ENCODE measurements at regions of chr5 and their contacts with region 1.

Region 1: DNA sequence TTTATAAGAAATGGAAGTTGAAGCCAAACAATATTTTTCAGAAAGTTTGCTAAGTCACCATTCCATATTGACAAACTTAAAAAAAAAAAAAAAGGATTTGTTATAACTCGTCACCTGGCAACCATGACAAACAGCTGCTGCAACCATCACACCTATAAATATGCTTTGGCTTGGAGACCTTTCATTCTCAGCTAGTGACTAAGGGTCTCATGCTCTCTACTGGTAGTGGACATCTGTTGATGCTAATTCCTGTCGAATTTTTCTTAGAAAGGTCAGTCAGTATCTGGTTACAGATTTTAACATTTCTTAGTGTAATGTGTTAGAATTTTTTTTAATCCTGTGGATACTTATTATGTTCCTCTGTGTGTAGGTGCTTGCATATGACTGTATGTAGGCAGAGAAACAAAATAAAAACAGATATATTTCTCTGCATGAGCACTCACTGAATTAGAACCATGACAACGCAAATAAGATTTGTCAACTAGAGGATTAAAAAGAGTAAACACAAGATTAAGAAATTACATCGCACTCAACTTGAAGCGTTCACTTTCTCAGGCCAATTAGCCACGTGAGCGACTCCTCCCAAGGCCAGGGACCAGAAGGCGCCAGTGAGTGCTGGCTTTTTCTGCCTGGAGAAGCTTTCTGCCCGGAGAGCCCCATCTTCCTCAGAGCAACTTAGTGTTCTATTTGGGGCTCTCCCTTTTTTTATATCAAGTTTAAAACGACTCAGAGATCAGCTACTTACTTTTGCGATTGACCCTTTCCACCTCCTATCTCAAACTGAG is 27.0 kb upstream of the ZNF622 start:
- DNase-seq: peak; percentile 75 to 88 (median 82)
- ATAC-seq: peak; percentile 89
- H3K4me3 ChIP-seq: no peak overlapping the region
- H3K27ac ChIP-seq: peak overlapping the region; percentile 48 to 87 (median 78)
- H3K4me1 ChIP-seq: peaks cover 68% of the 10 kb centered on the region
- H3K27me3 ChIP-seq: no peaks in the 10 kb centered on the region
- CTCF ChIP-seq: no peak
- POLR2A ChIP-seq: peak in 2 of 3 donors; percentile 34 to 55

Region 2: GRCh38 chr5:16552666-16553343 is 60.2 kb after region 1 on chr5:
- intact Hi-C with region 1: loop called (anchors 5 kb)
- DNase-seq: peak; percentile 89 to 93 (median 89)
- ATAC-seq: peak; percentile 90
- H3K4me3 ChIP-seq: no peak overlapping the region
- H3K27ac ChIP-seq: no peak overlapping the region
- H3K4me1 ChIP-seq: peaks cover 19% of the 10 kb centered on the region
- H3K27me3 ChIP-seq: no peaks in the 10 kb centered on the region
- CTCF ChIP-seq: peak; percentile 69 to 86 (median 84)
- POLR2A ChIP-seq: no peak

Region 3: GRCh38 chr5:16666883-16667398 is 174.4 kb after region 1 on chr5:
- intact Hi-C with region 1: loop called (anchors 10 kb)
- DNase-seq: peak; percentile 61 to 77 (median 66)
- ATAC-seq: peak; percentile 64
- H3K4me3 ChIP-seq: no peak overlapping the region
- H3K27ac ChIP-seq: peak overlapping the region; percentile 28 to 83 (median 68)
- H3K4me1 ChIP-seq: peaks cover 57% of the 10 kb centered on the region
- H3K27me3 ChIP-seq: no peaks in the 10 kb centered on the region
- CTCF ChIP-seq: peak in 6 of 7 experiments; percentile 37 to 73 (median 69)
- POLR2A ChIP-seq: peak in 1 of 3 donors; percentile 12

Measured in body of pancreas (tissue), 4 donors.